Astrocyte of the cerebellum (primary cell): ENCODE measurements at regions of chrX and their contacts with region 1.

Region 1: DNA sequence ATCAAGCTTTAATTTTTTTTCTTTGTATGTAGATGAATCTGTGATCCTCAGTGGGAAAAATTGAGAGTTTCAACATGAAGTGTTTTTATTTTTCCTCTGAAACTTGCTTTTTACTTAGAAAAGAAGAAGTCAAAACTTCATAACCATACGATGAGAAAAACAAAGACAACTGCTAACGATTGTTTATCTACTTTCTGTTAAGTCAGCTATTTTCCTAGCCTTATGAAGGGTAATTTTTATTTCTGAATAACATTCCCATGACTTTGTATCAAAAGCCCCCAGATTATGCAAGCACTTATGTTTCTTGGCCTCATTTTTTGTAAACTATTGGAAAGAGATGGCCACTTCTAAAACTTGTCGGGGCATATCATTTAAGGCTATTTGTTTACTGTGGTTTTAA is 645.1 kb upstream of the PRKX start:
- DNase-seq: no peak
- H3K4me3 ChIP-seq: no peak overlapping the region
- CTCF ChIP-seq: no peak

Region 2: DNA sequence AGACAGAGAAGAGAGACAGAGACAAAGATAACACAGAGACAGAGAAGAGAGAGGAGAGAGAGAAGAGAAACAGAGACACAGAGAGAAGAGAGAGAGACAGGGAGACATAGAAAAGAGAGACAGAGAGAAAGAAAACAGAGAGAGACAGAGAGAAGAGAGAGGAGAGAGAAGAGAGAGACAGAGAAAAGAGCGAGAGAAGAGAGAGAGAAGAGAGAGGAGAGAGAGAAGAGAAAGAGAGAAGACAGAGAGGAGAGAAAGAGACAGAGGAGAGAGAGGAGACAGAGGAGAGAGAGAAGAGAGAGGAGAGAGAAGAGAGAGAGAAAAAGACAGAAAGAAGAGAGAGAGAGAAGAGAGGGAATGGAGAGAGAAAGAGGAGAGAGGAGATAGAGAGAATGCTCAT is 44.0 kb before region 1 on chrX:
- in situ Hi-C with region 1: loop called (anchors 5 kb)
- DNase-seq: no peak
- H3K4me3 ChIP-seq: no peak overlapping the region
- CTCF ChIP-seq: no peak

Region 3: GRCh38 chrX:4435905-4436304 is 77.3 kb after region 1 on chrX:
- in situ Hi-C with region 1: no loop called
- DNase-seq: no peak
- H3K4me3 ChIP-seq: no peak overlapping the region
- CTCF ChIP-seq: no peak